ENCODE measurements at regions of chr10 and their contacts with region 1.

Region 1: DNA sequence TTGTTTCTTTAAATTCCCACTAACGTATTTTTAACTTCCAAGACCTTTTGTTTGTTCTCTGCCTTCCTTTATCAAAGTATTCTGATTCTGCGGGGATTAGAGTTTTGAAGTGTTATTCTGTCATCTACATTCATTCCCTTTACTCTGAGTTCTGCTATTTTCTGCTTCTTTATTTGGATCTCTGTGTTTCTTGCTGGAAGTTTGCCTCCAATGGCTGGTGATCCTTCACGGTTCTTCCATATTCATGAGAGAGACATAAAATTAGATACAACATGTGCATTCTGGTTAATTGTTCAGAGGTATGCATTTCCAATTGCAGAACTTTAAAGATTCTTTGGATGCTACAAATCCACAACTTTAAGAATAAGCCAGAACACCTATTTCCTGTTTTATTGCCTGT is 244.7 kb upstream of the ADARB2 start:
- DNase-seq: no peak
- H3K4me3 ChIP-seq: no peak overlapping the region
- H3K27ac ChIP-seq: no peak overlapping the region
- H3K27me3 ChIP-seq: peaks cover 0 to 17% (median 0%) of the 10 kb centered on the region in 45 donors
- CTCF ChIP-seq: no peak

Region 2: DNA sequence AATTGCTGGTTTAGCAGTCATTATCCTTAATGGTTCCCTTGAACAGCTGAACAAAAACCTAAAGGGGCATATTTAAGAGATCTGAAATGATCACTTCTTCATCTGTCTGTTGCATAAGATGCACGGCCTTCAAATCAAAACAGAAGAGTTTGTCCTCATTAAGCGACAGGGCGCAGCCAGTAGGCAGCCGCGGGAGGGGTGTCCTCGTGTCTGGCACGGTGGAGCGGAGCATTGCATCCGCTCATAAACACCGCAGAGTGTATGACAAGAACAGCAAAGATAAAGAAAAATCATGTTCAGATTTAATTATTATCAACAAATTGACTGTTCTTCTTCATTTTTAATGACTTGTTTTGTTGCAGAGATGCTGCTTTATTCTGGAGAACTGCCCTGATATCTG is 11.0 kb after region 1 on chr10:
- intact Hi-C with region 1: loop called in 1 of 2 experiments (anchors 1 kb)
- DNase-seq: no peak
- H3K4me3 ChIP-seq: no peak overlapping the region
- H3K27ac ChIP-seq: no peak overlapping the region
- H3K27me3 ChIP-seq: peaks cover 0 to 10% (median 0%) of the 10 kb centered on the region in 45 donors
- CTCF ChIP-seq: no peak

Measured in dorsolateral prefrontal cortex (tissue), 120 donors.